A673 (cell line): ENCODE measurements at regions of chr22 and their contacts with region 1.

Region 1: GRCh38 chr22:42780070-42780540 is 59.4 kb upstream of the A4GALT start:
- DNase-seq: peak; percentile 95
- H3K4me3 ChIP-seq: no peak overlapping the region
- H3K27ac ChIP-seq: no peak overlapping the region
- H3K4me1 ChIP-seq: no peaks in the 10 kb centered on the region
- H3K27me3 ChIP-seq: no peaks in the 10 kb centered on the region
- CTCF ChIP-seq: peak; percentile 82

Region 2: GRCh38 chr22:42080287-42080686 is 699.8 kb before region 1 on chr22:
- CTCF ChIA-PET with region 1: no interaction called
- POLR2A ChIA-PET with region 1: interaction called, 19 read pairs
- intact Hi-C with region 1: no loop called
- DNase-seq: peak; percentile 55
- H3K4me3 ChIP-seq: peak overlapping the region; percentile 61
- H3K27ac ChIP-seq: peak overlapping the region; percentile 89
- H3K4me1 ChIP-seq: peaks cover 13% of the 10 kb centered on the region
- H3K27me3 ChIP-seq: no peaks in the 10 kb centered on the region
- CTCF ChIP-seq: no peak

Region 3: DNA sequence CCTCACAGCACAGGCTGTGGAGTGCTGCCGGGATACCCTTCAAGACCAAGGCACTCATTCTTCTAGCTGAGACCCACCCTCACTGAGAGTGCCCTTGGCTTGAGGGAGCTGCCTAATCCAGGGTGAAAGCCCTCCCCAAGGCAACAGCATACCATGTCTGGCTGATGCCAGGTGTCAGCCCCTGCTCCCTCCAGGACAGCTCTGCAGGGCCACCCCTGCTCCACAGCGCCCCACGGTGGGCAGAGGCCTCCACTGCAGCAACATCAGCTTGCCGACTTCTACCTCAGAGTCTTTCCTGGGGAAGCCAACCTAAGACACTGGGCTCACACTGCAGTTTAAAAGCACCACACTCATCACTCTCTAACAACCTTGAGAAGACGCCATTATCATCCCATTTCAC is 280.1 kb after region 1 on chr22:
- CTCF ChIA-PET with region 1: no interaction called
- POLR2A ChIA-PET with region 1: no interaction called
- intact Hi-C with region 1: loop called (anchors 1 kb)
- DNase-seq: peak; percentile 55
- H3K4me3 ChIP-seq: no peak overlapping the region
- H3K27ac ChIP-seq: no peak overlapping the region
- H3K4me1 ChIP-seq: no peaks in the 10 kb centered on the region
- H3K27me3 ChIP-seq: no peaks in the 10 kb centered on the region
- CTCF ChIP-seq: peak; percentile 90

Region 4: GRCh38 chr22:43090130-43090789 is 310.2 kb after region 1 on chr22:
- CTCF ChIA-PET with region 1: no interaction called
- POLR2A ChIA-PET with region 1: no interaction called
- intact Hi-C with region 1: loop called (anchors 2 kb)
- DNase-seq: peak; percentile 93
- H3K4me3 ChIP-seq: no peak overlapping the region
- H3K27ac ChIP-seq: no peak overlapping the region
- H3K4me1 ChIP-seq: no peaks in the 10 kb centered on the region
- H3K27me3 ChIP-seq: no peaks in the 10 kb centered on the region
- CTCF ChIP-seq: peak; percentile 68

Region 5: DNA sequence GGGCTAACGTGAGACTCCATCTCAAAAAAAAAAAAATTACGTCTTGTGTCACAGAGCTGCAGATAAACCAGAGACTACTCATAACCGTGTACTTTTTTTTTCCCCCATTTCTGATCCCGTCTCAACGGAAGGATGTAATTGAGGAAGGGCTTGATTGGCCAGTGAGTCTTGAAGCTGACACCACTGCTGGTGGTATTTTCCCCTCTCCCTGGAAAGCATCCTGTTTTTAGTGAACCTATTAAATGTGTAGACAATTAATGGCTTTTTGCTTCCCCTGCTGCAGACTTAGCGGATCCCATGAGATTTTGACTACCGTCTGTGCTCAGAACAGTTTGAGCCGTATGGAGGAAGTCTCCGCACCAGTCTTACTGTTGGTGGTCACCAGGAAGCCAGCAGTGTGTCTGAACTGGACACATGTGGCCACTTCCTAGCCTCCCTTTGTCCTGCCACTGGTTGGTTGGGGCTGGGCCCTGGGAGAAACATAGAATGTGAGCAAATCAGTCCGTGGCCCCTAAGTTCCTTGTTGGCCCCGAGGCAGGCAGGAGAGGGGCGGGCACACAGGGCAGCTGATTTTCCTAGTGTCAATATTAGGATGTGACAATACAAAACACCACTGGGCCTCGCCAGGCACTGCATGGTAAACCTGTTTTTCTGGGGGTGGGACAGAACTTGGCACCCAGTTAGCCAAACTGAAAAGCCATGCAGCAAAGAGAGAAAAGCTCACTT is 333.6 kb after region 1 on chr22:
- CTCF ChIA-PET with region 1: no interaction called
- POLR2A ChIA-PET with region 1: interaction called, 10 read pairs
- intact Hi-C with region 1: no loop called
- DNase-seq: peak; percentile 83
- H3K4me3 ChIP-seq: no peak overlapping the region
- H3K27ac ChIP-seq: peak overlapping the region; percentile 17
- H3K4me1 ChIP-seq: peaks cover 11% of the 10 kb centered on the region
- H3K27me3 ChIP-seq: peaks cover 7% of the 10 kb centered on the region
- CTCF ChIP-seq: no peak

Region 6: DNA sequence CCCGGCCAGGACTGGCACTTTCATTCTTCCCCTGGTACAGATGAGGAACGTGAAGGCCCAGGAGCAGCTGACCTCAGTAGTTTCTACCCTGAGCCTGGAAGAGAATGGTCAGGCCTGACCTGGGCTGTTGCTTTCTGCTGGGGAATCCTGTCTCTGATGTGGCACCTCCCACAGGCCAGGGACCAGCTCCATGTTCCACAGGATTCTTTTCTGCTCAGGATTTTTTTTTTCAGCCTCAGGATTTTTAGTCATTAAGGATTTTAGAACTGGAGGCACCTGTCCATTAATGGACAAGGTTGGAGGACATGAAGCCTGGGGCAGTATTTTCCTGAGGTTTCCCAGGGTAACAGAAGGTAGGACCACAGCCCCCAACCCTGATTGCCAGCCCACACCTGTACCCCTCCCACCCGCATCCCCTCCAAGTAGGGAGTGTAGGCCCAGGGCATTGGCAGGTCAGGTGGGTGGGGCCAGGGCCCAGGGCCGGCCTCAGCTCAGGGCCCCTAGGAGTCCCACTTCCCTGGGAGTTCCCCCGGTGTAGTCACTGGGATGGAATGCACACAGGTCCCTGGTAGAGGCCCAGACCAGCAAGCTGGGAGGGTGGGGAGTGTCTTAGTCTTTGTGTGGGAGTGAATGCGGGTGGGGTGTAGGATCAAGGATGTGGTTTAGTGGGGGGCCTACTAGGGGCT is 346.5 kb after region 1 on chr22:
- CTCF ChIA-PET with region 1: no interaction called
- POLR2A ChIA-PET with region 1: no interaction called
- intact Hi-C with region 1: no loop called
- DNase-seq: no peak
- H3K4me3 ChIP-seq: no peak overlapping the region
- H3K27ac ChIP-seq: no peak overlapping the region
- H3K4me1 ChIP-seq: peaks cover 6% of the 10 kb centered on the region
- H3K27me3 ChIP-seq: no peaks in the 10 kb centered on the region
- CTCF ChIP-seq: no peak